Transverse colon (tissue), 4 donors: ENCODE measurements at regions of chr5 and their contacts with region 1.

Region 1: DNA sequence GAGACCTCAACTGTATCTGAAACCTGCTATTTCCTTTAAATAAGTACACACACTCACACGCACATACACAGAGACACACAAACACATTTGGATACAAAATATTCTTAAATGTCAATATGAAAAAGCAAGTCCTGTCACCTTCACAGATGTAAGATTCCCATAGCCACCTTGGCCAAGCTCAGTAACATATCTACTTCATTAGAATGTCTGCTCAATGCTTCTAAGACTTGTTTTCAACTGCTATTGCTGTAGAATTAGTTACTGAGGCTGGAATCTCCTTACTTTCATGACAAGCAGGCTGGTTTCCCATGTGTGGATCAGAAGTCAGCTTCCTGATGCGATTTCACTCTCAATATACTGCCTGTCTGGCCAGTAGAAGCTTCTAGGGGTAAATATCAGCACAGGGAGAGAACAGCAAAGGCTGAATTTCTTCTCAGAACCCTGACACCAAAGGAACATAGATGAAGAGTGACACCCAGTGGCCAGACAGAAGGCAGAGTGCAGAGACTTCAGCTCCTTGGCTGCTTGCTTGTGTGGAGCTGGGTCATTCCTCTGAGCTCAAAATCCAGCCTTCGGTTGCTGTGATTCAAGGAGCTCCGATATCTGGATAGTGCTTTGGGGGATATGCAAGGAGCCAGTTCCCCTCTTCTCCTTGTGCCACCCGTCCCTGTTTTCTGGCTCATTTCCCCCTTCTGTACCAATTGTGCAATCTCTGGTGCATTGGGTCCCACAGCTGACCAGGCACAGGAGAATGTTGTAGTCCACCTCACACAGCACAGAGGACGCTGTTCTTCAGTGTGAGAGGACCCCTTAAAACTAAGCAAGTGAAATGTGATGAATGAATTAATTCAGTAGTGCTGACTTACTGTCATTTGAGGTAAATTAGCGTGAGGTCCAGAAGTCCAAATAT is 26.6 kb upstream of the ABLIM3 start:
- DNase-seq: peak; percentile 57
- H3K4me3 ChIP-seq: no peak overlapping the region
- H3K27ac ChIP-seq: no peak overlapping the region
- H3K4me1 ChIP-seq: no peaks in the 10 kb centered on the region
- H3K27me3 ChIP-seq: no peaks in the 10 kb centered on the region
- CTCF ChIP-seq: peak; percentile 53 to 67 (median 56)
- EP300 ChIP-seq: no peak
- POLR2A ChIP-seq: no peak

Region 2: GRCh38 chr5:148739524-148739923 is 375.1 kb before region 1 on chr5:
- in situ Hi-C with region 1: loop called (anchors 5 to 25 kb)
- intact Hi-C with region 1: no loop called
- DNase-seq: no peak
- H3K4me3 ChIP-seq: no peak overlapping the region
- H3K27ac ChIP-seq: no peak overlapping the region
- H3K4me1 ChIP-seq: peaks cover 0 to 10% (median 0%) of the 10 kb centered on the region in 4 donors
- H3K27me3 ChIP-seq: no peaks in the 10 kb centered on the region
- CTCF ChIP-seq: no peak
- EP300 ChIP-seq: no peak
- POLR2A ChIP-seq: no peak

Region 3: DNA sequence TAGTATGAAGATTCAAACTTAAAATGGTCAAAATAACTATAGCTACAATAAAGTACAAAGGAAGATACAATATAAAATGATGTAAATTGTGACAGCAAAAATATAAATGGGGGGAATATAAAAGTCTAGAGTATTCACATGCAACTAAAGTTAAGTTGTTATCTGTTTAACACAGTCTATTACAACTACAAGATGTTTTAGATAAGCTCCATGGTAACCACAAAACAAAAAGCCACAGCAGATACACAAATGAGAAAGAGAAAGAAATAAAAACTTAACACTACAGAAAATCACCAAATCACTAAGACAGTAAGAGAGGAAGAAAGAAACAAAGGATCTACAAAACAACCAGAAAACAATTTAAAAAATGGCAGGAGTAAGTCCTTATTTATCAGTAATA is 34.8 kb before region 1 on chr5:
- in situ Hi-C with region 1: no loop called
- intact Hi-C with region 1: loop called (anchors 2 kb)
- DNase-seq: no peak
- H3K4me3 ChIP-seq: no peak overlapping the region
- H3K27ac ChIP-seq: no peak overlapping the region
- H3K4me1 ChIP-seq: no peaks in the 10 kb centered on the region
- H3K27me3 ChIP-seq: no peaks in the 10 kb centered on the region
- CTCF ChIP-seq: no peak
- EP300 ChIP-seq: no peak
- POLR2A ChIP-seq: no peak

Region 4: DNA sequence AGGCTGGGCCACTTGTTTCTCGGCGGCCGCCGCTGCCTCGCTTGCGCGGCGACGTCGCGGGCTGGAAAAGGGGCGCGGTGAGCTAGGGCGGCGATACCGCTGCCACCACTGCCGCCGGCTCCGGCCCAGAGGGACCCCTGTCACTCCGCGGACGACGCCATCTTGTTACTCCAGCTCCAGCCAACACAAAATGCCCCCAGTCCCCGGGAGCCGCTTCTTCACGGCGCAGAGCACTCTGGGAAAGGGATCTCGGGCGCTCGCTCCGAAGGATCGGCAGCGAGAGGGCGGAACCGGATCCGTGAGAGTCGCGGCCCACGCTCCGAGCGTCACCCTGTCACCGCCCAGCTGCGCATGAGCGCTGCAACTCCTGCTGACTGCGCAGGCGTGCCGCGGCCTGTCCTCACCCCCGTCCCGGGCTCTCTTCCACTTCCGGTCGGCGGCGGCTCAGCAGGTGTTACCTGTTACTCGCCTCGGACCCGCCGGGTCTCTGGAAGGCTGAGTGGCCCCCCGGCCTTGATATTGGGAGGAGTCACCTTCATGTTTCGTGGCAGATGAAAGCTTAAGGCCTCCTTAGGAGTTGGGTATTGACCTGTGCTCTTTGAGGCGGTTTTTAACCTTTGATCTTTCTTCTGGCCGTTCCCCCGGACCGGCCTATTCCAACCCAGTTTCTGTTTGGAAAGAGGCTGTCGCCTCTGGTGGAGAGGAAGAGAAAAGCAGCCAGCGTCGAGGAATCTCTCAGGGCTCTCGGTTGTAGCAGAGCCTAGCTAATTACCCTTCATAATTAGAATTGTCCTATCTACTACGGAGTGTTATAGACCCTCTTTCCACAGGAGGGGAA is 436.8 kb after region 1 on chr5 and contains the start of gene CSNK1A1:
- in situ Hi-C with region 1: no loop called
- intact Hi-C with region 1: no loop called
- DNase-seq: peak; percentile 99
- H3K4me3 ChIP-seq: peak within 1 kb of the TSS; percentile 75 to 84 (median 80)
- H3K27ac ChIP-seq: peak within 1 kb of the TSS; percentile 98 to 99 (median 98)
- H3K4me1 ChIP-seq: peaks cover 24 to 39% (median 29%) of the 10 kb centered on the region in 4 donors
- H3K27me3 ChIP-seq: no peaks in the 10 kb centered on the region
- CTCF ChIP-seq: peak; percentile 77 to 98 (median 85)
- EP300 ChIP-seq: no peak
- POLR2A ChIP-seq: peak; percentile 97
- total RNA-seq, gene CSNK1A1: 159 to 260 (median 184) TPM